Dendritic cell treated with granulocyte-macrophage colony-stimulating factor and Interleukin-4, amounts not matched to agents 40 ng/mL and 50 ng/mL, for 4 days (primary cell): ENCODE measurements at regions of chr19 and their contacts with region 1.

Region 1: DNA sequence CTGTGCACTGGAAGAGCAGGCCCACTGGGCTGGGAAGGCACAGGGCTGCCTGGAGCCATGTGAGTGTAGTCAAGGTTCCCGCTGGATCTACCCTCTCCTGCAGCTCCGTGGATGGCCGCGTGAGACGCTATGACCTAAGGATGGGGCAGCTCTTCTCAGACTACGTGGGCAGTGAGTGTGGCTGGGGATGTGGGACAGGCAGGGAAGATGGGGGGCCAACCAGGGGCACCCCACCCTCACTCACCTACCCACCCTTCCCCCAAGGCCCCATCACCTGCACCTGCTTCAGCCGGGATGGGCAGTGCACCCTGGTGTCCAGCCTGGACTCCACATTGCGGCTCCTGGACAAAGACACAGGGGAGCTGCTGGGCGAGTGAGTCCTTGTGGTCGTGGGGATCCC is 6.1 kb downstream of the WDR83 start:
- H3K4me3 Mint-ChIP-seq: no peak overlapping the region
- H3K27ac Mint-ChIP-seq: no peak overlapping the region
- H3K4me1 Mint-ChIP-seq: peaks cover 69% of the 10 kb centered on the region
- H3K27me3 Mint-ChIP-seq: no peaks in the 10 kb centered on the region

Region 2: GRCh38 chr19:12564016-12564664 is 108.6 kb before region 1 on chr19:
- intact Hi-C with region 1: loop called (anchors 1 kb)
- H3K4me3 Mint-ChIP-seq: no peak overlapping the region
- H3K27ac Mint-ChIP-seq: no peak overlapping the region
- H3K4me1 Mint-ChIP-seq: no peaks in the 10 kb centered on the region
- H3K27me3 Mint-ChIP-seq: peaks cover 3% of the 10 kb centered on the region

Region 3: DNA sequence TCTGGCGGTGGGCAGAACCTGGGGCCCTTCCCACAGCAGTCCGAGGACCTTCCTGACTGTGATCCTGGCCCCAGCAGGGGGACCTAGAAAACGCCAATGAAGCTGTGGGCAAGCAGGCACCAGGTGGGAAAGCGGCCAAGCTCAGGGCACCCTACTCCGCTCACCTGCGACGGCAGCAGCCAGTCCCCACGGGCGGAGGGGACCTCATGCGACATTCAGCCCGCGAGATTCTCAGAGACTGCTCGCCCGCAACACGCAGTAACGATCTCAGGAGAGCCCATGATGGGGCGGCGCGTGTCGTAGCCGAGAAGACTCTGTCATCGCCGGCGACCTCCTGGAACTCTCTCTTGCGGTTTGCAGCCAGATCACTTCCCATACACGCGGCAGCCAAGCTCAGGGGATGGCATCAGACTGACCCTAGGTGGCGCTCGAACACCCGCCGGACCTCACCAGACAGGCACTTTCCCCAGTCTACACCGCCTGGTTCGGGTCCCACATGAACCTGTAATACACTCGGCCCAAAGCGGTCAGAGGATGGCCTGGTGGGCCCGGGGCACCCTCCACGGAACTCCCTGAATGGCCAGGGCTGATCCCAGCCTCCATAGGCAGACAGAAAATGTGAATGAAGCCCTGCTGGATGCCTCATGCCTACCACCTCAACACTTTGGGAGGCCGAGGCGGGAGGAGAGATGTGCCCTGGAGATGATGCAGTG is 32.7 kb before region 1 on chr19:
- intact Hi-C with region 1: loop called (anchors 1 kb)
- H3K4me3 Mint-ChIP-seq: peak overlapping the region; percentile 52
- H3K27ac Mint-ChIP-seq: peak overlapping the region; percentile 28
- H3K4me1 Mint-ChIP-seq: peaks cover 10% of the 10 kb centered on the region
- H3K27me3 Mint-ChIP-seq: no peaks in the 10 kb centered on the region

Region 4: DNA sequence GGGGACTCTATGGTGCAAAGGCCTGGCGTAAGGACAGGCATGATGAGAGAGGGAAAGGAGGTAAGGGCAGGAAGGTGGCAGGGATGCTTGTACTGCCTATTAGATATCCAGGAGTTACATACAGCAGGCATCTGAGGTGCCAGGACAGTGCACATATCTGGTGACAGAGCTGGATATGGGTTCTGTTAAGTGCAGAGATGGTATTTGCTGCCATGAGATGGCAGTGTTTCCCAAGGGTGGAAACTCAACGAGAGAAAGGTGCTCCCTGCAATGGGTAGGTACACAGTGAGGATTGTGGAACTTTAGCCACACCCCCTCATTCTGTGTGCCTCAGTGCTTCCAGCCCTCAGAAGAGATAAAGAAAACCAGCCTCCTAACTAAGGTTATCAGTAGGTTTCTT is 44.1 kb after region 1 on chr19:
- intact Hi-C with region 1: no loop called
- H3K4me3 Mint-ChIP-seq: no peak overlapping the region
- H3K27ac Mint-ChIP-seq: no peak overlapping the region
- H3K4me1 Mint-ChIP-seq: peaks cover 26% of the 10 kb centered on the region
- H3K27me3 Mint-ChIP-seq: no peaks in the 10 kb centered on the region

Region 5: DNA sequence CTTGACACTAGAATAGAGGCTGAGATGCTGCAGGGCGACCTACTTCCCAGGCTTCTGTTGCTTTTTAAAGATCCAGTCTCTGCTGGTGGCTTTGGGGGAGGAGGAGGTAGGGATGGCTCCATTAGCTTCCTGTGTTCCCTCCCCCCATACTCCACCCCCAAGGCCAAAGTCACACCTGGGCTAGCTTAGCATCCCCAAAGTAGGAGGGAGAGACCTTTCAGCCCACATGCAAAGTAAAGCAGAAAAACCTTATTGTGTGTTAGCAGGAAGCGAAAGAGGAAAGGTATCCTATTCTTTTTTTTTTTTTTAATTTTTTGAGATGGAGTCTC is 54.2 kb after region 1 on chr19:
- intact Hi-C with region 1: no loop called
- H3K4me3 Mint-ChIP-seq: no peak overlapping the region
- H3K27ac Mint-ChIP-seq: peak overlapping the region; percentile 32
- H3K4me1 Mint-ChIP-seq: peaks cover 45% of the 10 kb centered on the region
- H3K27me3 Mint-ChIP-seq: no peaks in the 10 kb centered on the region